Sigmoid colon (tissue), 7 donors: ENCODE measurements at regions of chr4 and their contacts with region 1.

Region 1: GRCh38 chr4:165493359-165493758 is 114.6 kb downstream of the CPE start:
- DNase-seq: peak; percentile 85
- H3K4me3 ChIP-seq: peak overlapping the region in 1 of 4 donors; percentile 29
- H3K27ac ChIP-seq: no peak overlapping the region
- H3K4me1 ChIP-seq: peaks cover 0 to 3% (median 0%) of the 10 kb centered on the region in 4 donors
- H3K27me3 ChIP-seq: no peaks in the 10 kb centered on the region
- CTCF ChIP-seq: peak; percentile 19 to 74 (median 46)
- EP300 ChIP-seq: no peak
- POLR2A ChIP-seq: no peak

Region 2: GRCh38 chr4:165459909-165460308 is 33.5 kb before region 1 on chr4:
- intact Hi-C with region 1: no loop called
- DNase-seq: no peak
- H3K4me3 ChIP-seq: no peak overlapping the region
- H3K27ac ChIP-seq: no peak overlapping the region
- H3K4me1 ChIP-seq: peaks cover 0 to 24% (median 9%) of the 10 kb centered on the region in 4 donors
- H3K27me3 ChIP-seq: no peaks in the 10 kb centered on the region
- CTCF ChIP-seq: no peak
- EP300 ChIP-seq: no peak
- POLR2A ChIP-seq: no peak

Region 3: DNA sequence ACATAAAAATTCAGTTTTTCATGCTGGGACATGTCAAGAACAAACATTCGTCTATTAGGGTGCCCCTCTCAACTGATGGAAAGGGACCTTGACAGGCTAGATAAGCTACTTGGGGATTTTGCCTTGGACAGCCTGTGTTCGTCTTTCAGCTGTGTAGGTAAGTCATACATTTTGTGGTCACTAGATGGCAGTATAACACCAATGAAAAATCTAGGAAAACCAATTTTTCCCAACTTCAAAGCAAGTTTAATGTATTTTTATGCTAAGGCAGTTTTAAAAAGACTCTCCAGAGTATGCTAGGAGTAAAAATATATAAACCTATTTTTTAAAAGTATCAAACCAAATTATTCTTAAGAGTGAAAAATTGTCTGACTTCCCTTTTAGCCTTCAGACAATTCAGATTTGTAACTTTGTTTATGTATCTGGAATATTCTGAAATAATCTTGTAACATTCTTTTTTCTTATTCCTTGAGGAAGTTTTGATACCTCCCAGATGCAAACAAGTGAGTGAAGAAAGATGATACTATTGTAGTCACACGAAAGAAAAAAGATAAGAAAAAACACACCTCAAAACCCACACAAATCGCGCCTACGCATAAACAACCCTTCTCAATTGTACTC is 43.8 kb after region 1 on chr4:
- intact Hi-C with region 1: loop called (anchors 2 kb)
- DNase-seq: no peak
- H3K4me3 ChIP-seq: no peak overlapping the region
- H3K27ac ChIP-seq: no peak overlapping the region
- H3K4me1 ChIP-seq: no peaks in the 10 kb centered on the region
- H3K27me3 ChIP-seq: no peaks in the 10 kb centered on the region
- CTCF ChIP-seq: peak; percentile 50 to 74 (median 58)
- EP300 ChIP-seq: no peak
- POLR2A ChIP-seq: no peak

Region 4: DNA sequence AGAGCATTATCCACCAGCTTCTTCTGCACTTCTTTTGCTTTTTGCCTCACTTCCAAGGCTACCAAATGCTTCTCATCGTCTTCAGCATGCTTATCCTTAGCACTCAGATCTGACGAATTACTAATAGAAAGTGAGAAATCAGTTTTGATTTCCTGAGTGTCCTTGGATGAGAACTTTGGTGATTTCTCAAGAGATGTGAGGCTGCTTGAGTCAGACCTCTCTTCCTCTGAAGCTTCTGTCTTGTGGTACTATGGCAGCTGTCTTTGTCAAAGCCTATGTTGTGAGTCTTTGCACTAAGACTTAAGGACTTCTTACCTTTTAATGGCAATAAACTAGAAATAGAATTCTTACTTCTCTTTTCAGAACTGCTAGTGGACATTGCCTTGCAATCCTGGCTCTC is 55.3 kb after region 1 on chr4:
- intact Hi-C with region 1: no loop called
- DNase-seq: no peak
- H3K4me3 ChIP-seq: no peak overlapping the region
- H3K27ac ChIP-seq: no peak overlapping the region
- H3K4me1 ChIP-seq: no peaks in the 10 kb centered on the region
- H3K27me3 ChIP-seq: no peaks in the 10 kb centered on the region
- CTCF ChIP-seq: no peak
- EP300 ChIP-seq: no peak
- POLR2A ChIP-seq: no peak

Region 5: GRCh38 chr4:166091912-166092510 is 598.7 kb after region 1 on chr4:
- intact Hi-C with region 1: loop called (anchors 2 kb)
- DNase-seq: no peak
- H3K4me3 ChIP-seq: no peak overlapping the region
- H3K27ac ChIP-seq: no peak overlapping the region
- H3K4me1 ChIP-seq: no peaks in the 10 kb centered on the region
- H3K27me3 ChIP-seq: no peaks in the 10 kb centered on the region
- CTCF ChIP-seq: peak; percentile 56 to 66 (median 60)
- EP300 ChIP-seq: no peak
- POLR2A ChIP-seq: no peak